MCF 10A (cell line): ENCODE measurements at regions of chr3 and their contacts with region 1.

Region 1: GRCh38 chr3:168847291-168847883 is 751.7 kb upstream of the GOLIM4 start:
- DNase-seq: peak; percentile 54
- H3K4me3 Mint-ChIP-seq: no peak overlapping the region
- H3K27ac Mint-ChIP-seq: no peak overlapping the region
- H3K4me1 Mint-ChIP-seq: no peaks in the 10 kb centered on the region
- H3K27me3 Mint-ChIP-seq: peaks cover 79% of the 10 kb centered on the region
- CTCF ChIP-seq: peak; percentile 52

Region 2: DNA sequence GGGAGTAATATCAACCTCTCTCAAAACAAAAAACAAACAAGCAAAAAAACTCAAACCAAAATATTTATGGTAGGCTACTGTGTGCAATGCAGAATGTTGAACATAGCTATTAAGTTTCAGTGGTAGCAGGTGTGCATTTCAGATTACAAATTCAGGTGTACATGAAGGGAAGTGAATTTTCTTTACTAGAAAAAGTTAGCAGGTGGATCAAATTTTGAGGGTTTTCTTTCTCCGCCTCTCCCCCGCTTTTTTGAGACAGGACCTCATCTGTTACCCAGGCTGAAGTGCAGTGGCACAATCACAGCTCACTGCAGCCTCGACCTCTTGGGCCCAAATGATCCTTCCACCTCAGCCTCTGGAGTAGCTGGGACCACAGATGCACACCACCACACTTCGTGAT is 641.9 kb before region 1 on chr3:
- CTCF ChIA-PET with region 1: interaction called, 137 read pairs
- POLR2A ChIA-PET with region 1: no interaction called
- intact Hi-C with region 1: no loop called
- DNase-seq: no peak
- H3K4me3 Mint-ChIP-seq: no peak overlapping the region
- H3K27ac Mint-ChIP-seq: no peak overlapping the region
- H3K4me1 Mint-ChIP-seq: no peaks in the 10 kb centered on the region
- H3K27me3 Mint-ChIP-seq: peaks cover 28% of the 10 kb centered on the region
- CTCF ChIP-seq: no peak

Region 3: GRCh38 chr3:168220556-168220955 is 626.8 kb before region 1 on chr3:
- CTCF ChIA-PET with region 1: interaction called, 15 read pairs
- POLR2A ChIA-PET with region 1: no interaction called
- intact Hi-C with region 1: no loop called
- DNase-seq: peak; percentile 36
- H3K4me3 Mint-ChIP-seq: no peak overlapping the region
- H3K27ac Mint-ChIP-seq: no peak overlapping the region
- H3K4me1 Mint-ChIP-seq: no peaks in the 10 kb centered on the region
- H3K27me3 Mint-ChIP-seq: peaks cover 76% of the 10 kb centered on the region
- CTCF ChIP-seq: no peak

Region 4: DNA sequence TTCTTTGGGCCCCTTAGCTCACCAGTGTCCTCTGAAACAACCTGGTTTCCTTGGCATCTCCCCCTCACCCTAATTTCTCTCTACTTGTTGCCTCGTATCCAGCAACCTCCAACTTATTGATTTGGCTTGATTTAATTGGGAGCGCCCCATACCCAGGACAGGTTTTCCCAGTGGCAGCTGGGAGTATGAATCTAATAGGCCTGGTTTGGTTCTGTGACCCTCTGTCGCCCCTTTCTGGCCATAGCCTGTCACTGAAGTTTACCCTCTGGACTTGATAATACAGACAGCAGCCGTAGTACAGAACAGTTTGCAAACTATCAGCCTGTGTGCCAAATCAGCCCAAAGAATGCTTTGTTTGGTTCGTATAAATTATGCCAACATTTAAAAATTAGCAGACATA is 226.6 kb before region 1 on chr3:
- CTCF ChIA-PET with region 1: no interaction called
- POLR2A ChIA-PET with region 1: no interaction called
- intact Hi-C with region 1: loop called (anchors 1 kb)
- DNase-seq: peak; percentile 51
- H3K4me3 Mint-ChIP-seq: no peak overlapping the region
- H3K27ac Mint-ChIP-seq: no peak overlapping the region
- H3K4me1 Mint-ChIP-seq: no peaks in the 10 kb centered on the region
- H3K27me3 Mint-ChIP-seq: peaks cover 79% of the 10 kb centered on the region
- CTCF ChIP-seq: peak; percentile 38

Region 5: DNA sequence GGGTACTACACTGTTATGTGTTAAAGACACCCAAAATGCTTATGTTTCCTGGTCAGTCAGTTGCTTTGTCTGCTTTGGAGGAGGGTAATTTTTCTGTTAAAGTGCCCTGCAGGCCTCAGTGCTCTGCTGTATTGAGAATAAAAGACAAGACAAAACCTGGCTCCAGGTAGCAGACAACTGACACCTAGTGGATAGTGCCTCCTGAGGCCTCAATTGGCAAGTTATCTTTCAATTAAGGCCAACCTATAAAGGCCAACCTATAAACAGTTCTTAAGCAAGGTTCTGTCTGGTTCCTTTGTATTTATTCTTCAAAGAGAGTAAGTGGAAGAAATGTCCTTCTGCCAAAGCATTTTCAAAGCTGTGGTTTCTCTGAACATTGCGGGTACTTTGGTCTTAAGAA is 42.3 kb after region 1 on chr3:
- CTCF ChIA-PET with region 1: no interaction called
- POLR2A ChIA-PET with region 1: no interaction called
- intact Hi-C with region 1: no loop called
- DNase-seq: peak; percentile 19
- H3K4me3 Mint-ChIP-seq: no peak overlapping the region
- H3K27ac Mint-ChIP-seq: no peak overlapping the region
- H3K4me1 Mint-ChIP-seq: peaks cover 1% of the 10 kb centered on the region
- H3K27me3 Mint-ChIP-seq: no peaks in the 10 kb centered on the region
- CTCF ChIP-seq: no peak